ENCODE measurements at regions of chr5 and their contacts with region 1.

Region 1: GRCh38 chr5:104409636-104410035 is 847.0 kb upstream of the NUDT12 start:
- DNase-seq: no peak
- H3K4me3 ChIP-seq: no peak overlapping the region
- H3K27ac ChIP-seq: no peak overlapping the region
- H3K4me1 ChIP-seq: no peaks in the 10 kb centered on the region
- H3K27me3 ChIP-seq: no peaks in the 10 kb centered on the region
- CTCF ChIP-seq: no peak
- EP300 ChIP-seq: no peak
- POLR2A ChIP-seq: no peak

Region 2: GRCh38 chr5:104937591-104937990 is 528.0 kb after region 1 on chr5:
- intact Hi-C with region 1: loop called in 1 of 4 experiments (anchors 5 kb)
- DNase-seq: no peak
- H3K4me3 ChIP-seq: no peak overlapping the region
- H3K27ac ChIP-seq: no peak overlapping the region
- H3K4me1 ChIP-seq: no peaks in the 10 kb centered on the region
- H3K27me3 ChIP-seq: no peaks in the 10 kb centered on the region
- CTCF ChIP-seq: no peak
- EP300 ChIP-seq: no peak
- POLR2A ChIP-seq: no peak